ENCODE measurements at regions of chr4 and their contacts with region 1.

Region 1: GRCh38 chr4:153318696-153319320 is 25.7 kb upstream of the MND1 start:
- DNase-seq: no peak
- H3K4me3 ChIP-seq: no peak overlapping the region
- H3K27ac ChIP-seq: no peak overlapping the region
- H3K4me1 ChIP-seq: no peaks in the 10 kb centered on the region
- H3K27me3 ChIP-seq: no peaks in the 10 kb centered on the region
- CTCF ChIP-seq: peak; percentile 37

Region 2: GRCh38 chr4:152860051-152860450 is 458.8 kb before region 1 on chr4:
- intact Hi-C with region 1: no loop called
- DNase-seq: no peak
- H3K4me3 ChIP-seq: no peak overlapping the region
- H3K27ac ChIP-seq: no peak overlapping the region
- H3K4me1 ChIP-seq: no peaks in the 10 kb centered on the region
- H3K27me3 ChIP-seq: no peaks in the 10 kb centered on the region
- CTCF ChIP-seq: no peak

Region 3: DNA sequence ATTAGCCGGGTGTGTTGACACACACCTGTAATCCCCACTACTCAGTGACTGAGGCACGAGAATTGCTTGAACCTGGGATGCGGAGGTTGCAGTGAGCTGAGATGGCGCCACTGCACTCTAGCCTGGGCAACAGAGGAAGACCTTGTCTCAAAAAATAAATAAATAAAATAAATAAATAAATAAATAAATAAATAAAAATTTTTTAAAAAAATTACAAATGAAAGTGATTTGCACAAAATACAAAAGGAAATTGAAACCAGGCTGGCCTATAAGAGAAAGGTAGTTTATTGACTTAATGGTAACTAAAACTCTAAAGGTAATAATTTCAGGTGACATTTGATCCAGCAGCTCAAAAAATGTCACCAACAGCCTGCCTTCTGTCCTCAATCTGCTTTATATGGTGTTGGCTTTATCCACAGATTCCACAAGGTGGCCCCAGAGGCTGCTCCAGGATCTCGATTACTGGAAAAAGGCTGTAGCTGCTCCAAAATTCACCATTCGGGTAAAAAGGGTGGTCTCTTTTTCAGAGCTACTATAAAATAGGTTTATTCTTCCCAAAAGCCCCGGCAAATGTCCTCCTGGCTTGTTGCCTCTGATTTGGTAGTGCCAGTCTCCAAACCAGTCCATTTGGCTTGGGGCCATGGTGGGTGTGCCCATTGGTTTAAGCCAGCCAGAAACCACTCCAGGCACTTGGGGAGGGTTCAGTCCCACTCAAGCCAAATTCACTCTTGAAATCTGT is 175.9 kb before region 1 on chr4:
- intact Hi-C with region 1: loop called (anchors 5 kb)
- DNase-seq: peak; percentile 92
- H3K4me3 ChIP-seq: no peak overlapping the region
- H3K27ac ChIP-seq: peak overlapping the region; percentile 35
- H3K4me1 ChIP-seq: peaks cover 5% of the 10 kb centered on the region
- H3K27me3 ChIP-seq: no peaks in the 10 kb centered on the region
- CTCF ChIP-seq: peak; percentile 91

Region 4: GRCh38 chr4:153204247-153205027 is 114.4 kb before region 1 on chr4 and contains the start of gene TRIM2:
- intact Hi-C with region 1: loop called (anchors 10 kb)
- DNase-seq: peak; percentile 92
- H3K4me3 ChIP-seq: peak within 1 kb of the TSS; percentile 40
- H3K27ac ChIP-seq: peak within 1 kb of the TSS; percentile 90
- H3K4me1 ChIP-seq: no peaks in the 10 kb centered on the region
- H3K27me3 ChIP-seq: no peaks in the 10 kb centered on the region
- CTCF ChIP-seq: no peak
- total RNA-seq, gene TRIM2: 120 to 151 TPM